HepG2 (cell line): ENCODE measurements at regions of chr5 and their contacts with region 1.

Region 1: DNA sequence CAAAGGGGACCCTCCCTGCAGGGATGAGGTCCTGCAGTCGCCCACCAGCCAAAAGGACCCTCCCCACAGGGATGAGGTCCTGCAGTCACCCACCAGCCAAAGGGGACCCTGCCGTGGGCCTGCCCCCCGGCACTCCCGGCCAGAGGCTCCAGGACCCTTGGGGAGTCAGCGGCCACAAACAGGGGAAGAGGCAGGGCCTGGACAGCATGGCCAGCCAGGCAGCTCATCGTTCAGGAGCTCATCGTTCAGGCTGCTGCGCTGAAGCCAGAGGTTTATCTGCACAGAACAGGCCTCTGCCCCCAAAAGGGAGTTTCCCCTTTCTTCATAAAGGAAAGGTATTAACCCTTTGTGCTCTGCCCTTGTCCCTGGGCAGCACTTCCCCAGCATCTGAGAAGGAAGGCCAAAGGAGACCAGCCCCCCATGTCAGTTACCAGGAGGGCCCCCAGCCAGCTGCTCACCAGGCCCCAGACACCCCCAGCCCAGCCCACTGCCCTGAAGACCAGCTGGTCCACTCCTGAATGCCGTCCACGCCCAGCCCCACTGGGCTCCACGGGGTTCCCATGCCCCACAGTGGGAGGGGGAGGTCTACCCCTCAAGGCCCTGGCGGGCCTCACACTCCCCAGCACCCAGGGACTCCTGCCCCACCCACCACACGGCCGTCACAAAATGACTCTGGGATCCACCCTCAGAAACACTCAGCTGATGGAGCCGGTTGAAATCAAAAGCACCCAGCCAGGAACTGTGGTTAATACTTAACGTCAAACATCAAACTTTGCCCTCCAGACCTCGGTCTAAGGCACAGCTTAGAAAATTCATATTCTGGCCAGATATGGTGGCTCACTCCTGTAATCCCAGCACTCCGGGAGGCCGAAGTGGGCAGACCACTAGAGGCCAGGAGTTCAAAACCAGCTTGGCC is 6.3 kb downstream of the SLC12A7 start:
- DNase-seq: peak; percentile 93
- ATAC-seq: peak; percentile 70
- H3K4me3 ChIP-seq: peak overlapping the region; percentile 55 to 82 (median 60)
- H3K27ac ChIP-seq: peak overlapping the region; percentile 98
- H3K4me1 ChIP-seq: peaks cover 90% of the 10 kb centered on the region
- H3K27me3 ChIP-seq: no peaks in the 10 kb centered on the region; a peak in 1 of 5 replicates
- CTCF ChIP-seq: peak; percentile 13; the same call in 1 of the 2 replicates
- EP300 ChIP-seq: peak in 1 of 2 experiments; percentile 70; a peak in 2 of 4 replicates
- POLR2A ChIP-seq: peak in 1 of 2 experiments; percentile 46; a peak in 2 of 4 replicates
- RAD21 ChIP-seq: no peak

Region 2: GRCh38 chr5:757931-758697 is 347.5 kb before region 1 on chr5:
- CTCF ChIA-PET with region 1: no interaction called
- POLR2A ChIA-PET with region 1: no interaction called
- in situ Hi-C with region 1: no loop called
- intact Hi-C with region 1: no loop called
- DNase-seq: peak; percentile 74
- ATAC-seq: peak; percentile 63
- H3K4me3 ChIP-seq: peak overlapping the region in 1 of 3 experiments; percentile 47; a peak in 1 of 6 replicates
- H3K27ac ChIP-seq: no peak overlapping the region
- H3K4me1 ChIP-seq: peaks cover 47% of the 10 kb centered on the region
- H3K27me3 ChIP-seq: peaks cover 5 to 52% of the 10 kb centered on the region in 2 experiments
- CTCF ChIP-seq: no peak
- EP300 ChIP-seq: peak in 1 of 2 experiments; percentile 74; a peak in 1 of 4 replicates
- POLR2A ChIP-seq: peak in 1 of 2 experiments; percentile 41; a peak in 1 of 4 replicates
- RAD21 ChIP-seq: no peak; the same call in 1 of the 2 replicates

Region 3: DNA sequence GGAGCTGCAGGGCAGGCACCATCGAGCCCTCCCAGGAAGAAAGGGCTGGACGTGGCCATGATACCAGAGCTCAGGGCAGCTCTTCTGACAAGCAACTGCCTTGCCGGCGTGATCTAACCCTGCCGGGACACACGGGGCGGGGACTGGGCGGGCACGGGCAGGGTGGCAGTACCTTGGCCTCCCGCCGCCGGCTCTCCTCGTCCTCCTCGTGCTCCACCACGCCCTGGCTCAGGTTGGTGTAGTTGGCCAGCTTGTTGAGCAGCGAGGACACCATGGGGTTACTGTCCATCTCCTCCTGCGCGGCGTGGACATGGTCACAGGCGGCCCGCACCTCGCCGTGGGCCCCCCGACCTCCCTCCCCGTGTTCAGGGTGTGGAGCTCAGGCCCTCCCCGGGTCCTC is 12.2 kb before region 1 on chr5:
- CTCF ChIA-PET with region 1: no interaction called
- POLR2A ChIA-PET with region 1: interaction called, 15 read pairs
- in situ Hi-C with region 1: no loop called
- intact Hi-C with region 1: no loop called
- DNase-seq: no peak
- ATAC-seq: no peak; the same call in 2 of the 3 replicates
- H3K4me3 ChIP-seq: no peak overlapping the region
- H3K27ac ChIP-seq: no peak overlapping the region
- H3K4me1 ChIP-seq: no peaks in the 10 kb centered on the region
- H3K27me3 ChIP-seq: no peaks in the 10 kb centered on the region
- CTCF ChIP-seq: no peak
- EP300 ChIP-seq: no peak
- POLR2A ChIP-seq: no peak
- RAD21 ChIP-seq: no peak

Region 4: GRCh38 chr5:1125030-1125357 is 19.4 kb after region 1 on chr5:
- CTCF ChIA-PET with region 1: no interaction called
- POLR2A ChIA-PET with region 1: interaction called, 91 read pairs
- in situ Hi-C with region 1: no loop called
- intact Hi-C with region 1: no loop called
- DNase-seq: no peak
- ATAC-seq: no peak
- H3K4me3 ChIP-seq: no peak overlapping the region
- H3K27ac ChIP-seq: no peak overlapping the region
- H3K4me1 ChIP-seq: peaks cover 60% of the 10 kb centered on the region
- H3K27me3 ChIP-seq: peaks cover 15 to 87% of the 10 kb centered on the region in 2 experiments
- CTCF ChIP-seq: no peak
- EP300 ChIP-seq: no peak
- POLR2A ChIP-seq: no peak
- RAD21 ChIP-seq: no peak

Region 5: DNA sequence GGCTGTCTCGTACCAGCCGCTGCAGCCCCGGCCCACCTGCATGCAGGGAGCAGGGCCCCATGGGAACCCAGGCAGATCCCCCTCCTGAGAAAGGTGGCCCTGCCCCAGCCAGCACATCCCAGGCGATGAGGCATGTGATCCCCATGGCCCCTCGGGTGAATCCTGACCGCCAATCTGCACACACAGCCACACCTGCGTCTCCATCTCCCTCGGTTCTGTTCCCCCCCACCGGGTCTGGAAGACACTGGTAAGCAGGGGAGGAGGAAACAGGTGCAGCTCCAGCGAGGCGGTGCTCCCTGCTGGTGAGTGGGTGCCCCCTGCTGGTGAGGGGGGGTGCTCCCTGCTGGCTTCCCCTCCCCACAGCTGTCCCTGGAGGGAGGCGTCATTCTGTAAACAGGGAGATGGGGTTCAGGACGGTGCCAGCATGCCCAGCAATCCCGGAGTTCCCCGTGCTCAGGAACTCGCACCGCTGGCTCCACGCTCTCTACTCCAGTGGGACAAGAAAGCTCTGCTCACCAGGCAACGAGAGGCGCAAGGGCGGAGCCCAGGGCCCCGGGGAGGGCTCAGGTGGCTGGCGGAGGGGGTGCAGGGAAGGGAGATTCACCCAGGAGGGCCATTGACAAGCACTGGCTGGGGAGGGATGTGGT is 34.7 kb after region 1 on chr5:
- CTCF ChIA-PET with region 1: interaction called, 6 read pairs
- POLR2A ChIA-PET with region 1: interaction called, 200 read pairs
- in situ Hi-C with region 1: loop called (anchors 5 kb)
- intact Hi-C with region 1: loop called (anchors 1 kb)
- DNase-seq: peak; percentile 54
- ATAC-seq: peak; percentile 58
- H3K4me3 ChIP-seq: peak overlapping the region in 1 of 3 experiments; percentile 31; a peak in 1 of 6 replicates
- H3K27ac ChIP-seq: no peak overlapping the region
- H3K4me1 ChIP-seq: peaks cover 67% of the 10 kb centered on the region
- H3K27me3 ChIP-seq: peaks cover 3 to 41% of the 10 kb centered on the region in 2 experiments; a peak in 4 of 5 replicates
- CTCF ChIP-seq: peak; percentile 99
- EP300 ChIP-seq: no peak
- POLR2A ChIP-seq: no peak
- RAD21 ChIP-seq: peak; percentile 95

Region 6: GRCh38 chr5:1174122-1174936 is 68.7 kb after region 1 on chr5:
- CTCF ChIA-PET with region 1: no interaction called
- POLR2A ChIA-PET with region 1: interaction called, 30 read pairs
- in situ Hi-C with region 1: no loop called
- intact Hi-C with region 1: no loop called
- DNase-seq: peak; percentile 88
- ATAC-seq: peak; percentile 75
- H3K4me3 ChIP-seq: peak overlapping the region in 1 of 3 experiments; percentile 13; a peak in 1 of 6 replicates
- H3K27ac ChIP-seq: no peak overlapping the region
- H3K4me1 ChIP-seq: peaks cover 43% of the 10 kb centered on the region
- H3K27me3 ChIP-seq: peaks cover 0 to 15% of the 10 kb centered on the region in 2 experiments; a peak in 3 of 5 replicates
- CTCF ChIP-seq: peak; percentile 90
- EP300 ChIP-seq: no peak
- POLR2A ChIP-seq: no peak
- RAD21 ChIP-seq: peak; percentile 88